Activated B cell treated with CpG ODN at 0.5 μM for 24 hours (primary cell): ENCODE measurements at regions of chr3 and their contacts with region 1.

Region 1: DNA sequence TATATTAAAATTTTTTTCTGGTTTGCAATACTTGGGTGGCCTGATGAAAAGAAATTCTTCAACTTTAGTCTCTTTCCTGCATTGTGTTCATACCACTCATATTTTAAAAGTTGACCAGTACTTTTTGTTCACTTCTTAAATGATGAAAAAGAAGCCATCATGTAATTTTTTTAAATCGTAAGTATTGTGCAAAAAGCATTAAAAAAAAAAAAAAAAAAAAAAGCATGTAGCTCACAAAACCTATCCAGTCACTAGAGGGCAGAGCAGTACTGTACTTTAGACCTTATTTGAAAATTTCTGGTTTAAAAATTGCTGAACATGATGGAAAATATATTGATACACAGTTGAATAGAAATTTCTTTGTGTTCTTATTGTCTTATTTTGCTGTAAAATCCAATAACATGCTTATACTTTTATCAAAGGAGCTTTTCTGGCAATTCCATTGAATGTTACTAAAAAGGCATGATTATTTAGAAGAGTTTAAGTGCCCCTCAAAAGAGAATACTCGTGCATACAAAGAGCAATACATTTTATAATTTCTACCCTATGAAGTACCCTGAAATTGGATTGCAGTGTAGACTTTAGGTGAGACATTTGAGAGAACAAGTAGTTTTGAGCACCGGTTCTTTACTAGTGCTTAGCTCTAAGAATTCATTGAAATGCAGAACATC is 137.7 kb downstream of the BBX start:
- DNase-seq: no peak
- ATAC-seq: no peak
- H3K4me3 Mint-ChIP-seq: no peak overlapping the region
- H3K27ac Mint-ChIP-seq: no peak overlapping the region
- H3K4me1 Mint-ChIP-seq: peaks cover 18% of the 10 kb centered on the region
- H3K27me3 Mint-ChIP-seq: no peaks in the 10 kb centered on the region
- CTCF ChIP-seq: peak; percentile 85

Region 2: DNA sequence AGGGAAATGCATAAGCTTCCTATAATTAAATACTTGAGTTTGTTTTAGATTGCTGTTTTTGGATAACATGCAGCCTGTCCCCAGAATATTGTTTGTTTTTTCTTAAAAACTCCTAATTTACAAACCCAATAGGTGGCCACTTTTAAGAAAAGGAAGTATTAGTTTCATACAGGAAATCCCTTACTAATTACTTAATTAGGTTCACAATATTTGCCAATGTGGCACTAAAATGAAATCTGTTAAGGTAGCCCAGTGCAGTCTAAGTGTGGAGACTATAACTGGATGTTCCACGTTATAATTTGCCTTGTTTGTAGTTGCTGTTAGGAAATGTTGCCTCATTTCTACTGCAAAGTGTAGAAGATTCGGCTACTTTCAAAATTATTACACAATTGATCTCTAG is 58.1 kb after region 1 on chr3:
- CTCF ChIA-PET with region 1: no interaction called
- POLR2A ChIA-PET with region 1: no interaction called
- intact Hi-C with region 1: no loop called
- DNase-seq: no peak
- ATAC-seq: no peak
- H3K4me3 Mint-ChIP-seq: no peak overlapping the region
- H3K27ac Mint-ChIP-seq: no peak overlapping the region
- H3K4me1 Mint-ChIP-seq: peaks cover 21% of the 10 kb centered on the region
- H3K27me3 Mint-ChIP-seq: no peaks in the 10 kb centered on the region
- CTCF ChIP-seq: no peak

Region 3: DNA sequence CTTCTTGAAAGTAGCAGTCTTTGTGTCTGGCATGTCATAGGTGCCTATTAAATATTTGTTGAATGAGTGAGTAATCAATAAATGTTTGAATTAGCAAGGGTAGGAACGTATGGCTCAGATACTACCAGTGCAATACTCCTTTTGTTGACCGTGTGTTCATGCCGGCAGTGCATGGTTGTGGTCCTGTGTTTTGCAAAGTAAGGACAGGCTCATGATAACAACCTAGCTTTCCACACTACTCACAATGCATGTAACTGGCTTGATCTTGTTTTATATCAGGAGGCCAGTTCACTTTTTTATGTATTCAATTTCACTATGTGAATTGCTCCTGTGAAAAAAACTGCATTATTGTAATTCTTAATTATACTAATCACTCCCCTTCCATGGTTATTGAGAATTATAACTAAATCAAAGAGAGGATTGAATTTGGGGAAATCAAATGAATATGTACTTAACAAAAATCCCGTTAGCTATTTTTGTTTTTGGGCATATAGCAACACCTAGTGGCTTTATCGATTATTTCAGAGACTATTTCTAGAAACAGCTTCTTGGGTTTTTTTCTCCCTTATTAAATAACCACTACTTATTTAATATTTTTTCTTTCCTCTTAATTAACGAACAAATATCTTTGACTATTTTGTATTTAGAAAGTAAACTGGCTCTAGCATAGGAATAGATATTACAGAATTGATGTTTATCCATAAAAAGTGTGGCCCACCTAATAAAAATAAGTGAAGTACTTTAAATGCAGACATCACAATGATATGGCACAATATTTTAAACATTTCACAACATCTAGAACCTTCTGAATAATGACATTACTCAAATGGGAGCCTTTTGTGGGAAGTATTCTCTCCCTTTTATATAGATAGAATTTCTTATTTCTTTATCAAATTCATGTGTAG is 80.8 kb after region 1 on chr3:
- CTCF ChIA-PET with region 1: interaction called, 7 read pairs
- POLR2A ChIA-PET with region 1: no interaction called
- intact Hi-C with region 1: loop called (anchors 1 kb)
- DNase-seq: no peak
- ATAC-seq: no peak
- H3K4me3 Mint-ChIP-seq: no peak overlapping the region
- H3K27ac Mint-ChIP-seq: no peak overlapping the region
- H3K4me1 Mint-ChIP-seq: peaks cover 31% of the 10 kb centered on the region
- H3K27me3 Mint-ChIP-seq: no peaks in the 10 kb centered on the region
- CTCF ChIP-seq: no peak

Region 4: GRCh38 chr3:107846279-107846852 is 185.9 kb after region 1 on chr3:
- CTCF ChIA-PET with region 1: no interaction called
- POLR2A ChIA-PET with region 1: no interaction called
- intact Hi-C with region 1: loop called (anchors 5 kb)
- DNase-seq: no peak
- ATAC-seq: no peak
- H3K4me3 Mint-ChIP-seq: no peak overlapping the region
- H3K27ac Mint-ChIP-seq: no peak overlapping the region
- H3K4me1 Mint-ChIP-seq: no peaks in the 10 kb centered on the region
- H3K27me3 Mint-ChIP-seq: peaks cover 9% of the 10 kb centered on the region
- CTCF ChIP-seq: no peak

Region 5: GRCh38 chr3:108552267-108553159 is 892.1 kb after region 1 on chr3:
- CTCF ChIA-PET with region 1: interaction called, 3 read pairs
- POLR2A ChIA-PET with region 1: no interaction called
- intact Hi-C with region 1: loop called (anchors 5 kb)
- DNase-seq: no peak
- ATAC-seq: peak; percentile 34
- H3K4me3 Mint-ChIP-seq: peak overlapping the region; percentile 26
- H3K27ac Mint-ChIP-seq: peak overlapping the region; percentile 77
- H3K4me1 Mint-ChIP-seq: peaks cover 8% of the 10 kb centered on the region
- H3K27me3 Mint-ChIP-seq: no peaks in the 10 kb centered on the region
- CTCF ChIP-seq: no peak